Ovary (tissue), 10 donors: ENCODE measurements at regions of chr2 and their contacts with region 1.

Region 1: GRCh38 chr2:28219138-28219537 is 173.5 kb upstream of the FOSL2 start:
- DNase-seq: no peak
- H3K4me3 ChIP-seq: no peak overlapping the region
- H3K27ac ChIP-seq: no peak overlapping the region
- H3K4me1 ChIP-seq: peaks cover 4% of the 10 kb centered on the region
- H3K27me3 ChIP-seq: no peaks in the 10 kb centered on the region
- CTCF ChIP-seq: no peak
- EP300 ChIP-seq: no peak
- POLR2A ChIP-seq: no peak

Region 2: DNA sequence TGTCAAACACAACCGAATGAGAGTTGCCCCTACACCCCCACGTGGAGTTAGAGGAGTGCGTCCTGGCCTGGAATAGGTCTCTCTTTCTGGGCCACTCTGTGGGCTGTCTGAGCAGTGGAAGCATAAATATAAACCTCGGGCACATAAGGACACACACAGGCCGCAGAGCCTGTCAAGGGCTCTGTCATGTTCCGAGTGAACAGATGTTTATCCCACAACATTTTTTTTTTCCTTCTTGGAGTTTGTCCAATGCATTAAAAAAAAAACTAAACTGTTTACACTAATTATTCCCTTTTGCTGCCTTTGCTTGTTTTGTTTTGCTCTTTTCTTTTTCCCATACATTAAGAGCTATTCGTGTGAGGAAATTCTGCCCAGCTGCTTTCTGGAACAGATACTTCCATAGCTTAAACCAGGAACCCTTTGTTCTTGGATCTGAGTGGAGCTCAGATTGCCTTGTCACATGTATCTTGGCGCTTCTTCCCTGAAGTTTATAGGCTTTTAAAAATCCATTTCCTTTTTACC is 54.8 kb before region 1 on chr2:
- intact Hi-C with region 1: loop called in 1 of 4 experiments (anchors 10 kb)
- DNase-seq: no peak
- H3K4me3 ChIP-seq: no peak overlapping the region
- H3K27ac ChIP-seq: peak overlapping the region in 1 of 2 donors; percentile 16
- H3K4me1 ChIP-seq: peaks cover 14% of the 10 kb centered on the region
- H3K27me3 ChIP-seq: no peaks in the 10 kb centered on the region
- CTCF ChIP-seq: no peak
- EP300 ChIP-seq: no peak
- POLR2A ChIP-seq: no peak

Region 3: DNA sequence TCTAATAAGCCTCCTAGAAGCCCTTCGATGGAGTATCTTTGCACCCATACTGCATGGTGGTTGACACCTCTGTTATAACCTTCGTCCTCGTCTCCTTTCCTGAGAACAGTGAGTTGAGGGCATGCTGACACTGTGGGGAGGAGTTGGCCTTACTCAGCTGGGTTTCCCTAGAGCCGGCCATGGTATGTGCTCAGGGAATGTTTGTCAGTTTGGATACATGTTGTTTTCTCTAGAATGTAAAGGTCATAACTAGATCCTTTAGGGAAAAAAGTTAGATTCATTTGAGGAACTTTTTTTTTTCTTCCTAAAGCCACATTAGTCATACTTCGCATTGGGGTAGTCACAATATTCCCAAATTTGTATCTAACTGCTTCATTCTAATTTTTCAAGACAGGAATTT is 67.5 kb after region 1 on chr2:
- intact Hi-C with region 1: no loop called
- DNase-seq: no peak
- H3K4me3 ChIP-seq: no peak overlapping the region
- H3K27ac ChIP-seq: no peak overlapping the region
- H3K4me1 ChIP-seq: peaks cover 7% of the 10 kb centered on the region
- H3K27me3 ChIP-seq: no peaks in the 10 kb centered on the region
- CTCF ChIP-seq: no peak
- EP300 ChIP-seq: no peak
- POLR2A ChIP-seq: no peak

Region 4: GRCh38 chr2:28359222-28360065 is 140.3 kb after region 1 on chr2:
- intact Hi-C with region 1: no loop called
- DNase-seq: no peak
- H3K4me3 ChIP-seq: no peak overlapping the region
- H3K27ac ChIP-seq: no peak overlapping the region
- H3K4me1 ChIP-seq: peaks cover 19% of the 10 kb centered on the region
- H3K27me3 ChIP-seq: no peaks in the 10 kb centered on the region
- CTCF ChIP-seq: no peak
- EP300 ChIP-seq: no peak
- POLR2A ChIP-seq: no peak